ENCODE measurements at regions of chr12 and their contacts with region 1.

Region 1: DNA sequence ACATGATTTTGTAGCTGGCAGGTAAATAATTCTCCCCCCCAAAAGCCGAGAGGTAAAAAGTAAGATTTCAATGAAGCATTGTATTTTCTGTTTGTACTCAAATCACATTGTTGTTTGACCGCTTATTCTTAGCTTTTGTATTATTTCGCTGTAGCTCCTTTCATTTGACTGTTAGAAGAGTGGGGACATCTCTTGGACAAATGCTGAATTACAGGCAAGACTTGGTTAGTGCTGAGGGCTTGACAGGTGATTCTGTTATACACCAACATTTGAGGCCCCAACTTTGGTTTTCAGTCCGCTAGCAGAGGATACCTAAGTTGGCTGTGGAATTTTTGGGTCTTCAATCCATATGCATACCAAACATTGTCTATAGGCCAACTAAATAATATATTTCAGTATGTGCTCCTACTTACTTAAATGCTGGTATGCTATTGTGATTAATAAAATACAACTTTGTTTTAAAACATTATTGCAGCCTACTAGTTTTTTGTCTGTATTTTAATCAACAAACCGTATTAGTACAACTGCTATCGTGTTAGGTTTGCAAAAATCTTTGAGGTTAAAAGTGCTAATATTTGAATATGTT is 102.2 kb downstream of the ERC1 start:
- DNase-seq: peak; percentile 65
- ATAC-seq: peak; percentile 67
- H3K4me3 ChIP-seq: no peak overlapping the region
- H3K4me3 Mint-ChIP-seq: no peak overlapping the region
- H3K27ac ChIP-seq: no peak overlapping the region
- H3K27ac Mint-ChIP-seq: no peak overlapping the region
- H3K4me1 ChIP-seq: no peaks in the 10 kb centered on the region
- H3K4me1 Mint-ChIP-seq: peaks cover 1% of the 10 kb centered on the region
- H3K27me3 ChIP-seq: no peaks in the 10 kb centered on the region
- H3K27me3 Mint-ChIP-seq: no peaks in the 10 kb centered on the region
- CTCF ChIP-seq: peak; percentile 76

Region 2: DNA sequence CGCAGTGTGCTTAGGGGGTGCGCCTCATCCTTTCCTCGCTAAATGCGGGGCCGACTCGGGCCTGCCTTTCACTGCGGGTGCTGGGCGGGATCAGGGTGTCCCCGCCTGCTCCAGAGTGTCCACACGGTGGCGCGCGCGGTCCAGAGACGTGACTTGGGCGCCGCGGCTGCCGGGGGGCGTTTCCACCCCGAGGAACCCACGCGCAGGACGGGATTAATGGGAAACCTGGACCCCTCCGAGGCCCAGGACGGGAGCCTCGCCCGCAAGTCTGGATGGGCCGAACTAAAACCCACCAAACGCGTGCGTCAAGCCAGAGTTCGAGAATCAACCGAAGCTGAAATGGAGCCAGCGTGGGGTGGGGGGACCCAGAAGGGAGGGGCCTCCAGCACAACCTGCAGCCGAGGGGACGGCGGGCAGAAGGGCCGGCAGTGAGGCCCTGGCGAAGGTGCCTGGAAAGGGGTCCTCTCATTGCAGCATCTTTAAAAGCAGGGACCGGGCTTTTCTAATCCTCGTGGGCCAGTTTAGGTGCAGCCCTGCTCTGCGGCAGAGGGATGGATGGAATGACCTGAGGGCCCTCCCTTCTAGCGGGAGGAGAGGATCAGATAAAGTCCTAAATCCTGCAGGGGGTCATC is 523.3 kb before region 1 on chr12:
- CTCF ChIA-PET with region 1: interaction called, 24 read pairs
- POLR2A ChIA-PET with region 1: no interaction called
- intact Hi-C with region 1: loop called (anchors 5 kb)
- DNase-seq: peak; percentile 87
- ATAC-seq: peak; percentile 97
- H3K4me3 ChIP-seq: peak overlapping the region; percentile 21 to 72 (median 53)
- H3K4me3 Mint-ChIP-seq: peak overlapping the region; percentile 91
- H3K27ac ChIP-seq: no peak overlapping the region
- H3K27ac Mint-ChIP-seq: peak overlapping the region; percentile 32
- H3K4me1 ChIP-seq: peaks cover 4 to 14% of the 10 kb centered on the region in 2 donors
- H3K4me1 Mint-ChIP-seq: peaks cover 4% of the 10 kb centered on the region
- H3K27me3 ChIP-seq: no peaks in the 10 kb centered on the region
- H3K27me3 Mint-ChIP-seq: no peaks in the 10 kb centered on the region
- CTCF ChIP-seq: peak; percentile 94

Region 3: GRCh38 chr12:575948-576612 is 517.2 kb before region 1 on chr12:
- CTCF ChIA-PET with region 1: interaction called, 24 read pairs
- POLR2A ChIA-PET with region 1: no interaction called
- intact Hi-C with region 1: no loop called
- DNase-seq: peak; percentile 88
- ATAC-seq: peak; percentile 99
- H3K4me3 ChIP-seq: peak overlapping the region in 4 of 5 experiments; percentile 20 to 34 (median 26)
- H3K4me3 Mint-ChIP-seq: peak overlapping the region; percentile 79
- H3K27ac ChIP-seq: no peak overlapping the region
- H3K27ac Mint-ChIP-seq: peak overlapping the region; percentile 65
- H3K4me1 ChIP-seq: peaks cover 8 to 12% of the 10 kb centered on the region in 2 donors
- H3K4me1 Mint-ChIP-seq: peaks cover 8% of the 10 kb centered on the region
- H3K27me3 ChIP-seq: no peaks in the 10 kb centered on the region
- H3K27me3 Mint-ChIP-seq: no peaks in the 10 kb centered on the region
- CTCF ChIP-seq: peak; percentile 97

Region 4: DNA sequence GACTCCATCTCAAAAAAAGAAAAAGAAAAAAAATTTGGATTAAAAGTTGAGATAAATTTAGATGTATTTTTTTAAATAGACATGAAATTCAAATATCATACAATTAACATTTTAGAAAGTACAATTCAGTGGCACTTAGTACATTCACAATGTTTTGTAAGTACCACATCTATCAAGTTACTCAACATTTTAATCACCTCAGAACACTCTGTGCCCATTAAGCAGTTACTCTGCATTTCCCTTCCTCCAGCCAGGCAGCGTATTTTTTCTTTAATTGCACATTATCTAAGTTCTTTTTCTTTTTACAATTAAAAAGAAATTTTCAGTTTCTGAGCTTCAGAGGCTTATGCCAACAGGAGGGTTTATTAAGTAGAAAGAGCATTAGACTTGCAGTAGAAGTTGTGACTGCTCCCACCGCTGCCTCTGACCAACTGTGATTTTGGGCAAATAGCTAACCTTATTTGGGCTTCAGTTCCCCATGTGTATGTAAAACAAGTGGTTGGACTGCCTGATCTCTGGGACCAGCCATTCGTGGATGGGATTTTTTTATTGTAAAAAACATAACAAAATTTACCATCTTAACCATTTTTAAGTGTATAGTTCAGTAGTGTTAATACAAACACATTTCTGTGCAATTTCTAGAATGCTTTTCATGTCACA is 275.2 kb before region 1 on chr12:
- CTCF ChIA-PET with region 1: interaction called, 24 read pairs
- POLR2A ChIA-PET with region 1: no interaction called
- intact Hi-C with region 1: loop called (anchors 5 kb)
- DNase-seq: peak; percentile 24
- ATAC-seq: no peak
- H3K4me3 ChIP-seq: no peak overlapping the region
- H3K4me3 Mint-ChIP-seq: no peak overlapping the region
- H3K27ac ChIP-seq: no peak overlapping the region
- H3K27ac Mint-ChIP-seq: no peak overlapping the region
- H3K4me1 ChIP-seq: peaks cover 7 to 13% of the 10 kb centered on the region in 2 donors
- H3K4me1 Mint-ChIP-seq: peaks cover 33% of the 10 kb centered on the region
- H3K27me3 ChIP-seq: no peaks in the 10 kb centered on the region
- H3K27me3 Mint-ChIP-seq: no peaks in the 10 kb centered on the region
- CTCF ChIP-seq: no peak

Region 5: GRCh38 chr12:823028-823698 is 270.1 kb before region 1 on chr12:
- CTCF ChIA-PET with region 1: interaction called, 3 read pairs
- POLR2A ChIA-PET with region 1: no interaction called
- intact Hi-C with region 1: loop called (anchors 5 kb)
- DNase-seq: peak; percentile 78
- ATAC-seq: peak; percentile 94
- H3K4me3 ChIP-seq: no peak overlapping the region
- H3K4me3 Mint-ChIP-seq: peak overlapping the region; percentile 1
- H3K27ac ChIP-seq: peak overlapping the region; percentile 40 to 57
- H3K27ac Mint-ChIP-seq: peak overlapping the region; percentile 32
- H3K4me1 ChIP-seq: peaks cover 16 to 23% of the 10 kb centered on the region in 2 donors
- H3K4me1 Mint-ChIP-seq: peaks cover 35% of the 10 kb centered on the region
- H3K27me3 ChIP-seq: no peaks in the 10 kb centered on the region
- H3K27me3 Mint-ChIP-seq: no peaks in the 10 kb centered on the region
- CTCF ChIP-seq: no peak

Region 6: DNA sequence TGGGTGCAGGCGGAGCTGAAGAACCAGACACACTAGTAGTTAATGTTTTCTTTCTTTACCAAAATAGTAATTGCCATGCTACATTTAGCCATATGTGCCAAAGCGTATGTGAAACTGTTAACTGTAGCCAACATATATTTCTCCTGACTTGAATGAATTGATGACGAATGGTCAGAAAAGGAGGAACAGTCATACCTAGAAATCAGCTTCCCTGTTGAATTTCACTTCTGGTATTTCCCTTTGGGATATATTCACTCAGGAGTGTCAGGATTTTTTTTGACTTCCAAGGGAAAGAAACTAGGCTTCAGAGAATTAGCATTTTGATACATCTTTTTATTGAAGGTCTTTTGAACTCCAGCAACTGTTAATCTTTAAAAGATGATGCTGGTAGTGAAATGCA is 15.3 kb before region 1 on chr12:
- CTCF ChIA-PET with region 1: interaction called, 11 read pairs
- POLR2A ChIA-PET with region 1: no interaction called
- intact Hi-C with region 1: no loop called
- DNase-seq: no peak
- ATAC-seq: no peak
- H3K4me3 ChIP-seq: no peak overlapping the region
- H3K4me3 Mint-ChIP-seq: no peak overlapping the region
- H3K27ac ChIP-seq: no peak overlapping the region
- H3K27ac Mint-ChIP-seq: no peak overlapping the region
- H3K4me1 ChIP-seq: no peaks in the 10 kb centered on the region
- H3K4me1 Mint-ChIP-seq: peaks cover 6% of the 10 kb centered on the region
- H3K27me3 ChIP-seq: no peaks in the 10 kb centered on the region
- H3K27me3 Mint-ChIP-seq: no peaks in the 10 kb centered on the region
- CTCF ChIP-seq: no peak

Region 7: DNA sequence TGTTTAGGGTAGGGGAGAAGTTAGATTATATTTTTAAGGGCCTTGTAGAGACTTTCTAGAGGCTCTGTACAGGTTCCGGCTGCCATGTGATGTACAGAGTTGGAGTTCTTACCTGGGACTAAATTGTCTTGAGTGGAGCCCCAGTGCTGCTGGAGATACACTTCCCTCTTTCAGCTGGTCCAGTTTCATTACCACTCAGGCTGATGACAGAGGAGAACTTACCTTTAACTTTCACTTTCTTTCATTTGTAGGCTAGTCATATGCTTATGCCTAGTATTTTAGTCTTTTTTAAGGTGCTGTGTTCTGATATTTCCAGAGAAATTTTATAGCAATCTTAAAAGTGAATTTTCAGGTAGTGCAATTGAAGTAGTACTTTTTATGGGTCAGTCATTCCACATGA is 15.0 kb after region 1 on chr12:
- CTCF ChIA-PET with region 1: interaction called, 12 read pairs
- POLR2A ChIA-PET with region 1: no interaction called
- intact Hi-C with region 1: no loop called
- DNase-seq: peak; percentile 68
- ATAC-seq: peak; percentile 86
- H3K4me3 ChIP-seq: no peak overlapping the region
- H3K4me3 Mint-ChIP-seq: no peak overlapping the region
- H3K27ac ChIP-seq: no peak overlapping the region
- H3K27ac Mint-ChIP-seq: no peak overlapping the region
- H3K4me1 ChIP-seq: peaks cover 5 to 8% of the 10 kb centered on the region in 2 donors
- H3K4me1 Mint-ChIP-seq: peaks cover 13% of the 10 kb centered on the region
- H3K27me3 ChIP-seq: no peaks in the 10 kb centered on the region
- H3K27me3 Mint-ChIP-seq: no peaks in the 10 kb centered on the region
- CTCF ChIP-seq: no peak

Measured in B cell (primary cell).